ENCODE measurements at regions of chr1 and their contacts with region 1.

Region 1: DNA sequence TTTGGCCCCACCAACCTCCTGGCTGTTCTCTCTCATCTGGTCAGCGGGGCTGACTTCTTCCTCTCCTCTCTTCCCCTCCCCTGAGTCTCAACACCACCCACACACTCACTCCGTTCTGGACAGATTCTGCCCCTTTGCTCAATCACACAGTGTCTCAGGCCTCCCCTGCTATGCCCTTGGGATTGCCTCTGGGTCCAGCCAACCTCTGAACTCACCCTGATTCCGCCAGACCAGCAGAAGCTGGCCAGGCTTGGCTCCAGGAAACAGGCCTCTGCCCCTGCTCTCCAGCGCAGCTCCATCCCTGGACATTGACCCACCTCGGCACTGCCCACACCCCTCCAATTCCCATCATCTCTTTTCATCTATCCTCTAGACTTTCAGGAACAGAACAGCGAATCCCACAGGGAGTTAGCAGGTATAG is 22.1 kb downstream of the AHDC1 start:
- DNase-seq: peak; percentile 76 to 91
- H3K4me3 ChIP-seq: no peak overlapping the region
- H3K27ac ChIP-seq: peak overlapping the region; percentile 84 to 97
- H3K4me1 ChIP-seq: peaks cover 0 to 89% (median 53%) of the 10 kb centered on the region in 4 donors
- H3K27me3 ChIP-seq: no peaks in the 10 kb centered on the region
- CTCF ChIP-seq: no peak

Region 2: GRCh38 chr1:27597516-27598294 is 15.9 kb after region 1 on chr1:
- intact Hi-C with region 1: loop called (anchors 2 kb)
- DNase-seq: peak in 1 of 2 donors; percentile 61
- H3K4me3 ChIP-seq: peak overlapping the region in 1 of 2 donors; percentile 99
- H3K27ac ChIP-seq: peak overlapping the region; percentile 97 to 99
- H3K4me1 ChIP-seq: peaks cover 9 to 99% (median 91%) of the 10 kb centered on the region in 4 donors
- H3K27me3 ChIP-seq: no peaks in the 10 kb centered on the region
- CTCF ChIP-seq: no peak

Measured in tibial artery (tissue), 4 donors.